ENCODE measurements at regions of chr10 and their contacts with region 1.

Region 1: GRCh38 chr10:106565548-106565947 is 599.0 kb downstream of the SORCS1 start:
- DNase-seq: no peak

Region 2: GRCh38 chr10:106615081-106615480 is 49.5 kb after region 1 on chr10:
- intact Hi-C with region 1: loop called (anchors 2 kb)
- DNase-seq: no peak

Region 3: GRCh38 chr10:106761906-106762305 is 196.4 kb after region 1 on chr10:
- intact Hi-C with region 1: no loop called
- DNase-seq: no peak